Naive thymus-derived CD4-positive, alpha-beta T cell (primary cell): ENCODE measurements at regions of chr18 and their contacts with region 1.

Region 1: DNA sequence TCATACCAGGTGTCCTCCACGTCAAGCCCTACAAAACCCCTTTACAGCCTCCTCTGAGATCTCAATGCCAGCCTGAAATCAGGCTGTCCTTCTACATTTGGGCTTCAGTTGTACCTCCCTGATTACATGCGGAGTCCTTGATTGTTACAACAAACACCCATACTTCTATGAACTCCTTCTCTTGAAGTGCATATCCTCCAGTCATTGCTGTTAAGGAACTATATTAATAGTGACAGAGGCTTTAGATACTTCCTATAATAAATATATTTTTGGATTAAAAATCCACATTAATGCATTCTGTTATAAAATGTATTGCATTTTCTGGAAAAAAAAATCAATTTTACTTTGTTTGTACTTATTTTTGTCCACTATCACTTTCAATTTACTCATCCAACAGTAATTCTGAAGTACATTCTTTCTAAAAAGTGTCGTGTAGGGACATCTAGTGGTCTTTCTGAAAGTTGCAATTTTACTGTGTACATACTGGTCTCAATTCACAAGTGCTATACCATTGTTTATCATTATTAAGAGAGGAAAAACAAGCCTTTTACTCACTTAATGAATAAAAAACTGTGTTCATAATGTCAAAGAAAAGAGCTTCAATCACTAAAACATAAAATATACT is 316.4 kb downstream of the DSEL start:
- DNase-seq: peak in 5 of 9 donors; percentile 7 to 35 (median 10)
- ATAC-seq: peak; percentile 71
- H3K4me3 ChIP-seq: no peak overlapping the region
- H3K4me3 Mint-ChIP-seq: no peak overlapping the region
- H3K27ac ChIP-seq: no peak overlapping the region
- H3K27ac Mint-ChIP-seq: peak overlapping the region in 1 of 9 donors; percentile 78
- H3K4me1 ChIP-seq: no peaks in the 10 kb centered on the region
- H3K4me1 Mint-ChIP-seq: peaks cover 0 to 3% (median under 1%) of the 10 kb centered on the region in 7 donors
- H3K27me3 ChIP-seq: no peaks in the 10 kb centered on the region
- H3K27me3 Mint-ChIP-seq: peaks cover 4 to 25% (median 17%) of the 10 kb centered on the region in 5 donors

Region 2: GRCh38 chr18:67104700-67105284 is 95.3 kb before region 1 on chr18:
- CTCF ChIA-PET with region 1: interaction called, 4 read pairs
- POLR2A ChIA-PET with region 1: no interaction called
- intact Hi-C with region 1: loop called (anchors 1 kb)
- DNase-seq: peak in 4 of 9 donors; percentile 2 to 24 (median 6)
- ATAC-seq: peak; percentile 42
- H3K4me3 ChIP-seq: no peak overlapping the region
- H3K4me3 Mint-ChIP-seq: no peak overlapping the region
- H3K27ac ChIP-seq: no peak overlapping the region
- H3K27ac Mint-ChIP-seq: no peak overlapping the region
- H3K4me1 ChIP-seq: no peaks in the 10 kb centered on the region
- H3K4me1 Mint-ChIP-seq: no peaks in the 10 kb centered on the region
- H3K27me3 ChIP-seq: no peaks in the 10 kb centered on the region
- H3K27me3 Mint-ChIP-seq: peaks cover 0 to 9% (median 0%) of the 10 kb centered on the region in 5 donors

Region 3: DNA sequence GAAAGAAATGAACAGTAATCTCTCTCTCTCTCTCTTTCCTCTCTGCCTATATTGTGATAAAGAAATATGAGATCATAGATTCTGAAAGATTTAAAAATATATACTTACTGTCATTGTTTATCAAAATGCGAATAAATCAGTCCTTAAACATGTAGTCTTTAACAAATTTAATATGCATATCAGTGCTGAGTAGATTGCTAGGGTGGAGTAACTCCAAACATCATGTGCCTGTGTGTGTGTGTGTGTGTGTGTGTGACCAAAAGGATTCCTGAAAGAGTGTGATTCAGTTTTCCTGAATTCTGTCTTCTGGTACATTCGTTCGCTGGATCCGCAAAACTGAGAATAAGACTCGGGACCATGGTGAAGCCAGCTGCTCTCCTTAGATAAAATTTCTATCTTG is 340.5 kb after region 1 on chr18:
- CTCF ChIA-PET with region 1: no interaction called
- POLR2A ChIA-PET with region 1: no interaction called
- intact Hi-C with region 1: no loop called
- DNase-seq: no peak
- ATAC-seq: no peak
- H3K4me3 ChIP-seq: no peak overlapping the region
- H3K4me3 Mint-ChIP-seq: no peak overlapping the region
- H3K27ac ChIP-seq: no peak overlapping the region
- H3K27ac Mint-ChIP-seq: no peak overlapping the region
- H3K4me1 ChIP-seq: no peaks in the 10 kb centered on the region
- H3K4me1 Mint-ChIP-seq: peaks cover 0 to 7% (median 4%) of the 10 kb centered on the region in 7 donors
- H3K27me3 ChIP-seq: no peaks in the 10 kb centered on the region
- H3K27me3 Mint-ChIP-seq: peaks cover 0 to 13% (median 5%) of the 10 kb centered on the region in 5 donors